ENCODE measurements at regions of chr17 and their contacts with region 1.

Region 1: DNA sequence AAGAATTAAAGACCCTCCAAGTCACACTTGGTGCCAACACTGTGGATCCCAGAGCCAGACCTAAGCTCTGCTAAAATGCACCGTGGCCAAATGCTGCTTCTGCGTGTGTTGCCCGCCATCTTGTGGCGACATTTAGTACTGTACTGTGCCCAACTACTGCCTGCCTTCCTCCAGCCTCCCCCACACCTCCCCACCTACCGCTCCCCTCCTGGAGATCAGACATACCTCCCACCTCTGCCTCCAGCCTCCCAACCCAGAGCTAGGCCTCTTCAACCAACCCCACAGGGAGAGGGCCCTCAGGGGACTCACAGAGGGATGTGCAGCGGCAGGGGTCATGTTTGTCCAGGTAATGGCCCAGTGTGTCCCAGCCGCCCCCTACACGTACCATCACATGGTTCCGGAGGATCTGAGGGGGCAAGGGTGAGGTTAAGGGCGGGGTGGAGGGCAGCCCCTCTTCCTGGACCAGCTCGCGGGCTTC is 5.5 kb downstream of the GAS2L2 start:
- DNase-seq: peak; percentile 26
- H3K4me3 ChIP-seq: no peak overlapping the region
- CTCF ChIP-seq: peak; percentile 87

Region 2: GRCh38 chr17:35540589-35541404 is 206.8 kb before region 1 on chr17:
- CTCF ChIA-PET with region 1: interaction called, 31 read pairs
- POLR2A ChIA-PET with region 1: no interaction called
- DNase-seq: no peak
- H3K4me3 ChIP-seq: no peak overlapping the region; the same call in 1 of the 2 replicates
- CTCF ChIP-seq: no peak

Region 3: GRCh38 chr17:35605678-35606077 is 141.9 kb before region 1 on chr17:
- CTCF ChIA-PET with region 1: interaction called, 565 read pairs
- POLR2A ChIA-PET with region 1: no interaction called
- DNase-seq: peak; percentile 9
- H3K4me3 ChIP-seq: no peak overlapping the region
- CTCF ChIP-seq: no peak

Region 4: DNA sequence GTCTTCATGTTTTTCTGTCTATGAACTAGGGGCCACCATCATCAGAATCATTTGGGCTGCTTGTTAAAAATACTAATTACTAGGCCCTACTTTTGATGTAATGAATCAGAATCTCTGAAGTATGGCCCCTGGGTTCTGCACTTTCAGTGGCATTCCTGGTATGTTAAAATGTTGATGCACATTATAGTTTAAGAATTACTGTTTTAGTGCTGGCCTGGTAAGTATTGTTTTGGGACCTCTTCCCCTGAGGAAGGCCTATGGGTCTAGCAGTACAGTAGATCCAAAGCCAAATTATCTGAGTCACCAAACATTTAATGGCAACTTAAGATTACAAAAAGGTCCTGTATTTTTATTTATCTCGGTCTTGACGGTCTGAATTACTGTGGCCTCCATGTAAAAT is 101.7 kb before region 1 on chr17:
- CTCF ChIA-PET with region 1: interaction called, 10 read pairs
- POLR2A ChIA-PET with region 1: no interaction called
- DNase-seq: peak; percentile 14
- H3K4me3 ChIP-seq: no peak overlapping the region
- CTCF ChIP-seq: no peak

Region 5: GRCh38 chr17:35716897-35717465 is 30.6 kb before region 1 on chr17:
- CTCF ChIA-PET with region 1: interaction called, 17 read pairs
- POLR2A ChIA-PET with region 1: no interaction called
- DNase-seq: no peak
- H3K4me3 ChIP-seq: no peak overlapping the region
- CTCF ChIP-seq: no peak

Region 6: GRCh38 chr17:35764123-35764991 is 16.8 kb after region 1 on chr17:
- CTCF ChIA-PET with region 1: interaction called, 96 read pairs
- POLR2A ChIA-PET with region 1: no interaction called
- DNase-seq: no peak
- H3K4me3 ChIP-seq: peak overlapping the region; percentile 46
- CTCF ChIP-seq: peak; percentile 98

Region 7: GRCh38 chr17:35865412-35866340 is 118.1 kb after region 1 on chr17:
- CTCF ChIA-PET with region 1: no interaction called
- POLR2A ChIA-PET with region 1: no interaction called
- DNase-seq: no peak
- H3K4me3 ChIP-seq: no peak overlapping the region
- CTCF ChIP-seq: no peak